ENCODE measurements at regions of chr9 and their contacts with region 1.

Region 1: DNA sequence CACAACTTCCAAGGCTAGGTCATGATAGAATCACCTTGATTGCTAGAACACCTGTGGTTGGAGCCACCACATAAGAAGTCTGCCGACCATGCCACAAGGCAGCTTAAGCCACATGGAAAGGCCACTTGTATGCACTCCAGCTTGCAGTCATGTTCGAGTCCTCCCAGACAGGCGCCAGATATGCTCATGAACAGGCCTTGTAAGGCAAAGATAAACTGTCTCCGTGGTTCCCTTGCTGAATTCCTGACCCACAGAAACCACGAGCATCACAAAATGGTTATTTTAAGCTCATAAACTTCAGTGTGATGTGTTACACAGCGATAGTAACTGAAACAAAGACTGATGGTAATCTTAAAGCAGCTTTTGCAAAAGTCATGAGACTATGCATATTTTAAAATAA is 188.4 kb upstream of the DAPK1 start:
- DNase-seq: no peak

Region 2: GRCh38 chr9:86598411-86599239 is 710.6 kb before region 1 on chr9:
- intact Hi-C with region 1: no loop called
- DNase-seq: no peak

Region 3: DNA sequence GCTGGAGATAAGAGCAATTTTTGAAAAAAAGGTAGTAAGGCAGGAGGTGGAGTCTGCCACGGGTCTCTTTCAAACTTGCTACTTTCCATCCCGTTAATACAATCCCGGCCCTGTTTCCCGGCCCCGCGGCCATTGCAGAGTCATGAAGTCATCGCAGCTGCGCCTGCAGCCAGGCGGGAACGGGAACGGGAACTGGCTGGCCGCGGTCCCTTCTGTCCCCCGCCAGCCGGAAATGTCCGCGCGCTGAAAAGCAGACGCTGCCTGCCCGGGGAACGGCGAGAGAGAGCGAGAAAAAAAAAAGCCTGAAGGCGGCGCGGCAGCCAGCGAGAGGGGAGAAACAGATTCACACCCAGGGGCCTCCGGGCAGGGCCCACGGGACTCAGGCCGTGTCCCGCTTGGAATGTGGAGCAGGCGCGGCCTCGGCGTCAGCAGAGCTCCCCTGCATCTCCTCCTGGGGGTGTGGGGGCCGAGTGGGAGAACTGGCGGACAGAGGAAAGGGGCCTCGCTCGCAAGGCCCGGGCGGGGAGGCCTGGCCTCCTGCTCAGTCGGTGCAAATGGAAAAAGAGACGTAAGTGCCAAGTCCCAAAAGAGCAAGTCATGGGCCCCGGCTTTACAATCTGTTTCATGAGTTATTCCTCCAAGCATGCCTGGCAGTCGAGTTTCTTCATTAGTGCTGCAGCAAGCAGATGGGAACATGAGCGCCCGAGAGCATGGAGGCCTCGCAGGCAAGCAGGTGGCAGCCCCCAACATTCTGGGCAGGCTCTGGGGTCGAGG is 160.7 kb before region 1 on chr9:
- intact Hi-C with region 1: loop called in 1 of 2 experiments (anchors 10 kb)
- DNase-seq: peak; percentile 96

Region 4: DNA sequence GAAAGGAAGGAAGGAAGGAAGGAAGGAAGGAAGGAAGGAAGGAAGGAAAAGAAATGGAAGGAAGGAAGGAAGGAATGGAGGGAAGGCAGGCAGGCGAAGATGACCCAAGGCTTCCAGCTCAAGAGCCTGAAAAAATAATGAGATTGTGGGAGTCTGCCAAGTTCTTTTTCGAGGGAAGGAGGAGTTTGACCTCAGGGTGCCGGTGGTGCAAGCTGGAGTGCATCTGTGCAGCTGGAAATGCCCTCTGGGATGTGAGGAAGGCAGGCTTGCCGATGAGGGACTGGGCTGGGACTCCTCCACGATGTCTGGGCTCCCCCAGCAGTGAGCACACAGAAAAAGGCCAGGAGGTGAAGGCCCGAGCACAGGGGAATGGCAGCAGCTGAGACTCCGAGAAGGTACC is 33.5 kb after region 1 on chr9:
- intact Hi-C with region 1: no loop called
- DNase-seq: peak; percentile 82